ENCODE measurements at regions of chr16 and their contacts with region 1.

Region 1: GRCh38 chr16:23217646-23218045 is 35.1 kb downstream of the SCNN1G start:
- DNase-seq: peak; percentile 17
- H3K4me3 Mint-ChIP-seq: no peak overlapping the region
- H3K27ac Mint-ChIP-seq: peak overlapping the region; percentile 9
- H3K4me1 Mint-ChIP-seq: peaks cover 5% of the 10 kb centered on the region
- H3K27me3 Mint-ChIP-seq: no peaks in the 10 kb centered on the region
- CTCF ChIP-seq: no peak

Region 2: DNA sequence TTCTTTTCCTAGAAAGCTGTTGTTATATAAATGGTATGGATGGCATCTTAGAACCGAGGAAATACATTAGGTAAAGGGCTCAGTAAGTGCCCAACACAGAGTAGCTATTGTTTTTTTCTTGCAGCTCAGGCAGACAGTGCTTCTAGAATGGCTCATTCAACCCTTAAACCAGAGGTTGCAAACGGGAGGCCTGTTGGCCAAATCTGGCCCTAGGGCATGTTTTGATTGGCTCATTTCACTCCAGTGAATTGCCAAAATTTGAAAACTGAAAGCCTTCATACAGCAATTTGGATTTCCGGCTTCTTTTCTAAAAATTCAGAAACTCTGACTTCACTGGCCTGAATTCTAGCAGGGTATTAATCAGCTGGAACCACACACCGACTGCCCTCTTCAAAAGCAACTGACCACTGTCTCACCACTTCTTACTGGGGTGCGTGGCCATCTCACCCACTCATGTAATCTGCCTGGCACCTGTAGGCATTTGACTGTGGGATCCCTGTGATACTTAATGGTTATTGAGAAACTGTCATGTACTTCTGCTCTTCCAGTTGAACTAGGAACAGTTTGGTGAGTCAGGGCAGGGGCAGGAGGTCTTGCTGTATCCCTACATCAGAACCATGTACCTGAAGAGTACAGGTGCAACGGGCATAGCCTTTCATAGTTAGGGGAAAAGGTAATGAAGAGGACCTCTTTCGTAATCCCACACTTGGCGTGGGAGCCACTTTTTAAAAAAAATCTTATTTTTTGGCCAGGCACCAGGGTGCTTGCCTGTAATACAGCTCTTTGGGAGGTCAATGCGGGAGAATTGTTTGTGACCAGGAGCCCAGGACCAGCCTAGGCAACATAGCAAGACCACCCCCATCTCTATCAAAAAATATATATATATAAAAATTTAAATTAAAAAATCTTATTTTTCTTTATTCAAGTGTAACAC is 30.9 kb after region 1 on chr16:
- CTCF ChIA-PET with region 1: no interaction called
- POLR2A ChIA-PET with region 1: interaction called, 13 read pairs
- intact Hi-C with region 1: no loop called
- DNase-seq: peak; percentile 91
- H3K4me3 Mint-ChIP-seq: peak overlapping the region; percentile 55
- H3K27ac Mint-ChIP-seq: peak overlapping the region; percentile 82
- H3K4me1 Mint-ChIP-seq: peaks cover 9% of the 10 kb centered on the region
- H3K27me3 Mint-ChIP-seq: no peaks in the 10 kb centered on the region
- CTCF ChIP-seq: no peak

Measured in MCF 10A (cell line).